ENCODE measurements at regions of chr1 and their contacts with region 1.

Region 1: DNA sequence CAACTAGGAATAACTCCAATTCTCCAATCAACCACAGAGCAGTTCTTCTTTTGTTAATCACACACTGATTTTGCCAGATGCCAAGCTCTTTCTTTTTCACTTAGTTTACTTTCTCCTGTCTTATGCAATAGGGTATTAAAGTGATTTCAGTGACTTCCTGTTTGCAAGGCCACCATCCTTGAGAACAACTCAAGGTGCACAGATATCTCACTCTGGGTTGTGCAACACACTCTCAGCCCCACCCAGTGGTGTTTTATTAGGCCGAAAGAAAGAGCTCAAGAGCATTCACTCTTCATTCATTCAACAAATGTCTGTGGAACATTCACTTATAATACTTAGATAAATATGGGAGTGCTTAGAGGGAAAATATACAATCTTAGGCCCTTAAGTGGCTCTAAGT is 352.5 kb downstream of the ZNF326 start:
- DNase-seq: no peak
- ATAC-seq: no peak; the same call in 2 of the 3 replicates
- H3K4me3 ChIP-seq: no peak overlapping the region
- H3K27ac ChIP-seq: no peak overlapping the region
- H3K4me1 ChIP-seq: 0 out of 2 replicates have a peak, but pooled peaks cover 3% of the 10 kb centered on the region
- H3K27me3 ChIP-seq: no peaks in the 10 kb centered on the region
- CTCF ChIP-seq: no peak
- EP300 ChIP-seq: no peak
- POLR2A ChIP-seq: no peak
- RAD21 ChIP-seq: no peak

Region 2: GRCh38 chr1:89962024-89962741 is 385.2 kb before region 1 on chr1:
- CTCF ChIA-PET with region 1: no interaction called
- POLR2A ChIA-PET with region 1: no interaction called
- RAD21 ChIA-PET with region 1: no interaction called
- SMC1A ChIA-PET with region 1: no interaction called
- in situ Hi-C with region 1: no loop called
- intact Hi-C with region 1: no loop called
- DNase-seq: no peak
- ATAC-seq: peak; percentile 25; the same call in 1 of the 3 replicates
- H3K4me3 ChIP-seq: no peak overlapping the region
- H3K27ac ChIP-seq: no peak overlapping the region
- H3K4me1 ChIP-seq: peaks cover 12% of the 10 kb centered on the region
- H3K27me3 ChIP-seq: no peaks in the 10 kb centered on the region
- CTCF ChIP-seq: no peak
- EP300 ChIP-seq: no peak
- POLR2A ChIP-seq: no peak
- RAD21 ChIP-seq: no peak

Region 3: GRCh38 chr1:90357995-90358394 is 10.6 kb after region 1 on chr1:
- CTCF ChIA-PET with region 1: interaction called, 5 read pairs
- POLR2A ChIA-PET with region 1: interaction called, 11 read pairs
- RAD21 ChIA-PET with region 1: interaction called, 5 read pairs
- SMC1A ChIA-PET with region 1: interaction called, 51 read pairs
- in situ Hi-C with region 1: no loop called
- intact Hi-C with region 1: no loop called
- DNase-seq: peak; percentile 42
- ATAC-seq: peak; percentile 91
- H3K4me3 ChIP-seq: no peak overlapping the region
- H3K27ac ChIP-seq: no peak overlapping the region
- H3K4me1 ChIP-seq: no peaks in the 10 kb centered on the region; the same call in 1 of the 2 replicates
- H3K27me3 ChIP-seq: no peaks in the 10 kb centered on the region
- CTCF ChIP-seq: no peak
- EP300 ChIP-seq: peak; percentile 46 to 83; a peak in 3 of 4 replicates
- POLR2A ChIP-seq: no peak
- RAD21 ChIP-seq: no peak

Region 4: GRCh38 chr1:90386899-90387720 is 39.7 kb after region 1 on chr1:
- CTCF ChIA-PET with region 1: no interaction called
- POLR2A ChIA-PET with region 1: no interaction called
- RAD21 ChIA-PET with region 1: no interaction called
- SMC1A ChIA-PET with region 1: no interaction called
- in situ Hi-C with region 1: no loop called
- intact Hi-C with region 1: no loop called
- DNase-seq: no peak
- ATAC-seq: no peak
- H3K4me3 ChIP-seq: no peak overlapping the region
- H3K27ac ChIP-seq: no peak overlapping the region
- H3K4me1 ChIP-seq: no peaks in the 10 kb centered on the region
- H3K27me3 ChIP-seq: no peaks in the 10 kb centered on the region; a peak in 1 of 4 replicates
- CTCF ChIP-seq: no peak
- EP300 ChIP-seq: no peak
- POLR2A ChIP-seq: no peak
- RAD21 ChIP-seq: no peak